CD4-positive, alpha-beta memory T cell (primary cell): ENCODE measurements at regions of chr10 and their contacts with region 1.

Region 1: DNA sequence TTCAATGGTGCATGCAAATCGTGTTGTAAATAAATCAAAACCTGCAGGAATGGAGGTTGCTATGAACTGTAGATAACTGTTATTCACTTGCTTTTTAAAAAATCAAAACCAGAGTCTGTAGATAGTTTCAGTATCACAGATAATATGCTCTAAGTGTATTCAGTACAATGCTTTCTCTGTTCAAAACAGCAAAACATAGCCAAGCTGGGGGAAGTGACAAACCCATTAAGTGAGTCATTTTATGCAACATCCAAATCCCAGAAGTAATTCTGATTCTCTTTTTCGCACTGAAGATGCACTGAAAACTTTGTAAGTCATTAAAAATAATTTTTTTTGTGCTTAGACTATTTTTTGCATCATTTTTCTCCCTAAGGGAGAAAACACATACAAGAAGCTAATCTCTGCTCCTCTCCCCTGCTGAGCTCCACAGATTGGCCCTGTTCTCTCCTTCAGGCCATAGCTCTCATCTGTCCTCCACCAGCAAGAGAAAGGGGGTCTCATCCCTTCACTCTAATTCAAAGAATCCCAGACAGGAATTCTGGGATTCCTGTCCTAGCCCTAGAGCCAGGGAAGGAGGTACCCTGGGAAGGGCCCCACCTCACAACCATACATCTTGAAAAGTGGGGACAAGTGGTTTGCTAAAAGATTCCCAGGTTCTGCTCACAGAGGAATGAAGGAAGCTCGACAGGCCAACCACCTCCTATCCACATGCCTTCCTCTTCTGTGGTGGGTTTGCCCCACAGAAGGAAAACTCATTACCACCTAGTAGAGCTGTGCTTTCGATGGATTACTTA is 4.9 kb downstream of the PRTFDC1 start:
- DNase-seq: no peak
- H3K4me3 ChIP-seq: no peak overlapping the region
- H3K4me3 Mint-ChIP-seq: no peak overlapping the region
- H3K27ac ChIP-seq: no peak overlapping the region
- H3K27ac Mint-ChIP-seq: peak overlapping the region in 4 of 7 donors; percentile 4 to 48 (median 18)
- H3K4me1 ChIP-seq: peaks cover 11% of the 10 kb centered on the region
- H3K4me1 Mint-ChIP-seq: peaks cover 13 to 24% (median 17%) of the 10 kb centered on the region in 4 donors
- H3K27me3 ChIP-seq: no peaks in the 10 kb centered on the region
- H3K27me3 Mint-ChIP-seq: no peaks in the 10 kb centered on the region

Region 2: GRCh38 chr10:24811881-24812622 is 135.4 kb before region 1 on chr10:
- CTCF ChIA-PET with region 1: no interaction called
- POLR2A ChIA-PET with region 1: no interaction called
- intact Hi-C with region 1: no loop called
- DNase-seq: no peak
- H3K4me3 ChIP-seq: no peak overlapping the region
- H3K4me3 Mint-ChIP-seq: no peak overlapping the region
- H3K27ac ChIP-seq: no peak overlapping the region
- H3K27ac Mint-ChIP-seq: no peak overlapping the region
- H3K4me1 ChIP-seq: no peaks in the 10 kb centered on the region
- H3K4me1 Mint-ChIP-seq: peaks cover 0 to 3% (median 2%) of the 10 kb centered on the region in 4 donors
- H3K27me3 ChIP-seq: no peaks in the 10 kb centered on the region
- H3K27me3 Mint-ChIP-seq: peaks cover 0 to 3% of the 10 kb centered on the region in 2 donors

Region 3: DNA sequence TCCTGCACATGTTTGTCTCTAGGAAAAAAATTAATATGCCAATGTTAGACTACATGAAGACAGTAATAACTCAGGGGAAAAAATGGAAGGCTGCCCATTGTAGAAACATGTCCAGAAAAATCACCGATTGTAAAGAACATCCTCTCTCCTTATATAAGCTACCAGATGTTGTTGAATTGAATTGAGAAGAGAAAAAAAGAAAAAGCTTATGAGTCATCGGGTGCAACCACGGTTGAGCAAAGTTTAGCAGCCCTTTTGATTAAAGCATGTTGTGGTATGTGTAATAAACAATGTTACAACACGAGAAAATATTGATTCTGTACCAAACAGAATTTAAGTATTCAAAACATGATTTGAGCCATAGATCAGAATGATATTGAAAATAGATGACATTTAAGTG is 121.5 kb before region 1 on chr10:
- CTCF ChIA-PET with region 1: no interaction called
- POLR2A ChIA-PET with region 1: no interaction called
- intact Hi-C with region 1: loop called (anchors 10 kb)
- DNase-seq: peak in 3 of 5 donors; percentile 3 to 17 (median 5)
- H3K4me3 ChIP-seq: no peak overlapping the region
- H3K4me3 Mint-ChIP-seq: peak overlapping the region; percentile 27 to 77 (median 66)
- H3K27ac ChIP-seq: no peak overlapping the region
- H3K27ac Mint-ChIP-seq: peak overlapping the region in 6 of 7 donors; percentile 13 to 70 (median 34)
- H3K4me1 ChIP-seq: peaks cover 14% of the 10 kb centered on the region
- H3K4me1 Mint-ChIP-seq: peaks cover 18 to 27% (median 21%) of the 10 kb centered on the region in 4 donors
- H3K27me3 ChIP-seq: no peaks in the 10 kb centered on the region
- H3K27me3 Mint-ChIP-seq: no peaks in the 10 kb centered on the region